ENCODE measurements at regions of chr7 and their contacts with region 1.

Region 1: DNA sequence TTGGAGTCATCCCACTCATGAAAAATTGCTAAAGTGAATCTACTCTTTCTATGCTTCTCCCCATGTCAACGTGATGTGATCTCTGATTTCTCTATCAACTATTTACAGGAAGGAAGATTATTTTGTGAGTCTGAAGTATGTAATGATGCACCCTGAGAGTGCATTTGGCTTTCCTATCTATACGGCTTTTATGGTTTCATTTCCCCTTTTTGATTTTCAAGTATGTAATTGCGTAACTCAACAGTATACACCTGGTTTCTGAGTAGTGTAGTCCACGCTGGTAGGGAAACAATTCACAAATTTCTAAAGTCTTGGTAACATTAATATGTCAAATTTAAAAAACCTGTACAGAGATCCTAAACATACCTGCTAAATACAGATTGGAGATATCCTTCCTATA is 194.7 kb upstream of the SEMA3A start:
- DNase-seq: no peak
- ATAC-seq: no peak
- H3K4me3 ChIP-seq: no peak overlapping the region
- H3K27ac ChIP-seq: no peak overlapping the region
- H3K4me1 ChIP-seq: no peaks in the 10 kb centered on the region
- H3K27me3 ChIP-seq: no peaks in the 10 kb centered on the region
- CTCF ChIP-seq: no peak

Region 2: GRCh38 chr7:84218681-84219080 is 170.6 kb before region 1 on chr7:
- intact Hi-C with region 1: no loop called
- DNase-seq: no peak
- ATAC-seq: no peak
- H3K4me3 ChIP-seq: no peak overlapping the region
- H3K27ac ChIP-seq: no peak overlapping the region
- H3K4me1 ChIP-seq: peaks cover 0 to 7% (median 0%) of the 10 kb centered on the region in 9 donors
- H3K27me3 ChIP-seq: no peaks in the 10 kb centered on the region
- CTCF ChIP-seq: no peak

Region 3: DNA sequence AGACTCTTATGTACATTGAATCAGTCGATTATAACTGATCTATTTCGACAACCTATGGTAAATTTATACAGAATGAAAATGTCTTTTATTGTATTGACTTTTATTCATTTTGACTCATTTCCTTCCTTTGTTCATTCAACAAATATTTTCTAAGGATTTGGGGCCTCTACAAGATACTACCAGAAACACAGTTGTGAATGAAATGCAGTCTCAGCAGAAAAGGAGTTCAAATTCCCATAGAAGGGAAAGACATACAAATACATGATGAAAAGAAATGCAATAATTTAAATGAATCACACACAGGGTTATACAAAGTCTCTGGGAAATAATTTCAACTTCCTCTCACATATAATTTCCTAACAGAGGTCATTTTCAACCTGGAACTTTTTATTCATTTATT is 60.7 kb before region 1 on chr7:
- intact Hi-C with region 1: loop called in 1 of 10 experiments (anchors 10 kb)
- DNase-seq: no peak
- ATAC-seq: no peak
- H3K4me3 ChIP-seq: no peak overlapping the region
- H3K27ac ChIP-seq: no peak overlapping the region
- H3K4me1 ChIP-seq: no peaks in the 10 kb centered on the region
- H3K27me3 ChIP-seq: no peaks in the 10 kb centered on the region
- CTCF ChIP-seq: no peak

Region 4: GRCh38 chr7:84462259-84462658 is 73.0 kb after region 1 on chr7:
- intact Hi-C with region 1: no loop called
- DNase-seq: no peak
- ATAC-seq: no peak
- H3K4me3 ChIP-seq: no peak overlapping the region
- H3K27ac ChIP-seq: no peak overlapping the region
- H3K4me1 ChIP-seq: no peaks in the 10 kb centered on the region
- H3K27me3 ChIP-seq: no peaks in the 10 kb centered on the region
- CTCF ChIP-seq: no peak